ENCODE measurements at regions of chr10 and their contacts with region 1.

Region 1: DNA sequence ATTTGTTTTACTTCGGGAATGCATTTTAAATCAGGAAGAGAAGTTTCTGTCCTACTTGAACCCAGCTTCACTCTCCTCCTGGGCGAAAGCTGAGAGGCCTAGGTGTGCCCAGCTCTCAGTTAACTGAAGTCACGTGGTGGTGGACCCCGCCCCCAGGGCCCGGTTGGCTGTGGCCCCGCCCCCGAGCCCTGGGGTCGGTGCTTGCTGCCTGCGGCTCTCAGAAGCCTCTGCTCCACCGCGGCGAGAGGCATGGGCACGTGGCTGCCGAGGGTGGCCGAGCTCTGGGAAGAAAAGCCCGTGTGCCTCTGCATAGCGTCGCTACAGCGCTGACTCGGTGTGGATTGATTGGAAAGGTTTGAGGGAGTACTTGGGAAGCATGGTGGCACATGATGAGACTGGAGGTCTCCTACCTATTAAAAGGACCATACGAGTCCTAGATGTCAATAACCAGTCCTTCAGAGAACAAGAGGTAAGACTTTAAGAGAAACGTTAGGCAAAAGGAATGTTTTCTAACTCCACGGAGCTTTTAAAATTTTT is 34.1 kb downstream of the NET1 start:
- DNase-seq: peak; percentile 86
- ATAC-seq: peak; percentile 71
- H3K4me3 Mint-ChIP-seq: peak overlapping the region; percentile 70
- H3K27ac Mint-ChIP-seq: peak overlapping the region; percentile 45
- H3K4me1 Mint-ChIP-seq: peaks cover 53% of the 10 kb centered on the region
- H3K27me3 Mint-ChIP-seq: no peaks in the 10 kb centered on the region

Region 2: GRCh38 chr10:5423771-5424170 is 22.7 kb before region 1 on chr10:
- CTCF ChIA-PET with region 1: interaction called, 18 read pairs
- POLR2A ChIA-PET with region 1: no interaction called
- intact Hi-C with region 1: no loop called
- DNase-seq: no peak
- ATAC-seq: no peak
- H3K4me3 Mint-ChIP-seq: no peak overlapping the region
- H3K27ac Mint-ChIP-seq: no peak overlapping the region
- H3K4me1 Mint-ChIP-seq: peaks cover 2% of the 10 kb centered on the region
- H3K27me3 Mint-ChIP-seq: no peaks in the 10 kb centered on the region

Region 3: GRCh38 chr10:5461914-5462840 is 15.7 kb after region 1 on chr10:
- CTCF ChIA-PET with region 1: interaction called, 12 read pairs
- POLR2A ChIA-PET with region 1: no interaction called
- intact Hi-C with region 1: no loop called
- DNase-seq: no peak
- ATAC-seq: no peak
- H3K4me3 Mint-ChIP-seq: no peak overlapping the region
- H3K27ac Mint-ChIP-seq: no peak overlapping the region
- H3K4me1 Mint-ChIP-seq: peaks cover 17% of the 10 kb centered on the region
- H3K27me3 Mint-ChIP-seq: no peaks in the 10 kb centered on the region

Region 4: DNA sequence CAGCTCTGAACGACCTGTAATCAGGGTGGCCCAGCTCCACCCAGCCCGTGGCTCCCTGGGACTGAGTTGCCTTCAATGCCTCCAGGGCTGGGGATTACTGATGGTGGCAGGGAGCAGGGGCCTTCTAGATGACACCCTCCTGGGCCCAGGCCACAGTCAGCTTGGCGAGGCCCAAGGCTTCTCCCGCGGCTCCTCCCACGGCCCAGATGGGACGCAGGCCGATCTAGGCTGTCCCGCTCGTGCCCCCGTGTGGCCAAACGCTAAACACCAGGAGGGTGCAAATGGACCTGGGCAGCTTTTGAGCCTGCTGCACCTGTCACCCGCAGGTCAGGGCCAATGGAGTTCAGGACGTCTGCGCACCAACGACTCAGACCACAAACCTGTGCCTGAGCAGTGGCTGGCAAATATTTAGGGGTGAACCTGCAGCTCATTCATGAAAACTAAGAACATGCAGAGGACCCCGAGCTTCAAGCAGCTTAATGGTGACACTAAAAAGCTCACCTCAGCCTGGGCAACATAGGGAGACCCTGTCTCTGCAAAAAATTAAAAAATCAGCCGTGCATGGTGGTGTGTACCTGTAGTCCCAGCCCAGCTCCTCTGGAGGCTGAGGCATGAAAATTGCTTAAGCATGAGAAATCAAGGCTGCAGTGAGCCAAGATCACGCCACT is 176.8 kb after region 1 on chr10:
- CTCF ChIA-PET with region 1: interaction called, 178 read pairs
- POLR2A ChIA-PET with region 1: interaction called, 3 read pairs
- intact Hi-C with region 1: loop called (anchors 1 kb)
- DNase-seq: peak; percentile 93
- ATAC-seq: peak; percentile 95
- H3K4me3 Mint-ChIP-seq: no peak overlapping the region
- H3K27ac Mint-ChIP-seq: no peak overlapping the region
- H3K4me1 Mint-ChIP-seq: peaks cover 2% of the 10 kb centered on the region
- H3K27me3 Mint-ChIP-seq: peaks cover 4% of the 10 kb centered on the region

Region 5: GRCh38 chr10:5873515-5873995 is 427.1 kb after region 1 on chr10:
- CTCF ChIA-PET with region 1: no interaction called
- POLR2A ChIA-PET with region 1: no interaction called
- intact Hi-C with region 1: loop called in 1 of 2 experiments (anchors 5 kb)
- DNase-seq: peak; percentile 77
- ATAC-seq: peak; percentile 95
- H3K4me3 Mint-ChIP-seq: no peak overlapping the region
- H3K27ac Mint-ChIP-seq: no peak overlapping the region
- H3K4me1 Mint-ChIP-seq: peaks cover 4% of the 10 kb centered on the region
- H3K27me3 Mint-ChIP-seq: no peaks in the 10 kb centered on the region

Measured in activated CD4-positive, alpha-beta T cell treated with anti-CD3 and anti-CD28 coated beads for 36 hours (primary cell).